ENCODE measurements at regions of chr7 and their contacts with region 1.

Region 1: DNA sequence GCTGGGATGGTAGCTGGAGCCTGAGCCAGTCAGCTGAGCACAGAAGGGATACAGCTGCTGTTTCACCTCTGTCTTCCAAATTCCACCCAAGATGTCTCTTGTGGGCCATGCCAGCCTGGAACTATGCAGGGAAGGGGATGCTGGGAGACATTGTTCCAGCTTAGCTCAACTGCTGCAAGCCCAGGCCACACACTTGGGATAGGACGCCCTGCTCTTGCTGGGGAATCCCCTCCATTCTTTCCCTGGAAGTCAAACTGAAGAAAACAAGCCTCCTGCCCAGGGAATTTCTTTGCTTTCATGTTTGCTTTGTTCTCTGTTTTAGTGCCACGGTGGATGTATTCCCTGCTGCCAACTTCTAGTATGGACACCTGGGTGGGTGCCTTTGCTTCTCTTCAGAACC is 55.2 kb upstream of the CDK13 start:
- DNase-seq: no peak
- ATAC-seq: no peak
- H3K4me3 Mint-ChIP-seq: no peak overlapping the region
- H3K27ac Mint-ChIP-seq: no peak overlapping the region
- H3K4me1 Mint-ChIP-seq: peaks cover 7% of the 10 kb centered on the region; the same call in 1 of the 2 replicates
- H3K27me3 Mint-ChIP-seq: no peaks in the 10 kb centered on the region
- CTCF ChIP-seq: no peak

Region 2: GRCh38 chr7:39883812-39884390 is 11.0 kb before region 1 on chr7:
- CTCF ChIA-PET with region 1: interaction called, 19 read pairs
- POLR2A ChIA-PET with region 1: no interaction called
- DNase-seq: no peak
- ATAC-seq: no peak
- H3K4me3 Mint-ChIP-seq: no peak overlapping the region
- H3K27ac Mint-ChIP-seq: no peak overlapping the region; the same call in 1 of the 2 replicates
- H3K4me1 Mint-ChIP-seq: peaks cover 7% of the 10 kb centered on the region
- H3K27me3 Mint-ChIP-seq: no peaks in the 10 kb centered on the region
- CTCF ChIP-seq: no peak

Region 3: GRCh38 chr7:39910108-39910869 is 15.4 kb after region 1 on chr7:
- CTCF ChIA-PET with region 1: interaction called, 21 read pairs
- POLR2A ChIA-PET with region 1: no interaction called
- DNase-seq: no peak
- ATAC-seq: no peak; the same call in 1 of the 2 replicates
- H3K4me3 Mint-ChIP-seq: no peak overlapping the region
- H3K27ac Mint-ChIP-seq: no peak overlapping the region
- H3K4me1 Mint-ChIP-seq: no peaks in the 10 kb centered on the region
- H3K27me3 Mint-ChIP-seq: no peaks in the 10 kb centered on the region; the same call in 1 of the 2 replicates
- CTCF ChIP-seq: no peak

Region 4: GRCh38 chr7:39921506-39922175 is 26.7 kb after region 1 on chr7:
- CTCF ChIA-PET with region 1: interaction called, 21 read pairs
- POLR2A ChIA-PET with region 1: no interaction called
- DNase-seq: no peak
- ATAC-seq: peak; percentile 52; the same call in 1 of the 2 replicates
- H3K4me3 Mint-ChIP-seq: no peak overlapping the region
- H3K27ac Mint-ChIP-seq: no peak overlapping the region
- H3K4me1 Mint-ChIP-seq: peaks cover 9% of the 10 kb centered on the region
- H3K27me3 Mint-ChIP-seq: no peaks in the 10 kb centered on the region
- CTCF ChIP-seq: no peak

Region 5: GRCh38 chr7:39934132-39934531 is 39.2 kb after region 1 on chr7:
- CTCF ChIA-PET with region 1: no interaction called
- POLR2A ChIA-PET with region 1: no interaction called
- DNase-seq: no peak
- ATAC-seq: no peak
- H3K4me3 Mint-ChIP-seq: no peak overlapping the region
- H3K27ac Mint-ChIP-seq: no peak overlapping the region
- H3K4me1 Mint-ChIP-seq: peaks cover 2% of the 10 kb centered on the region; the same call in 1 of the 2 replicates
- H3K27me3 Mint-ChIP-seq: no peaks in the 10 kb centered on the region
- CTCF ChIP-seq: no peak

Measured in WTC11 (cell line).